Left ventricle myocardium superior (tissue), 1 donor: ENCODE measurements at regions of chr9 and their contacts with region 1.

Region 1: DNA sequence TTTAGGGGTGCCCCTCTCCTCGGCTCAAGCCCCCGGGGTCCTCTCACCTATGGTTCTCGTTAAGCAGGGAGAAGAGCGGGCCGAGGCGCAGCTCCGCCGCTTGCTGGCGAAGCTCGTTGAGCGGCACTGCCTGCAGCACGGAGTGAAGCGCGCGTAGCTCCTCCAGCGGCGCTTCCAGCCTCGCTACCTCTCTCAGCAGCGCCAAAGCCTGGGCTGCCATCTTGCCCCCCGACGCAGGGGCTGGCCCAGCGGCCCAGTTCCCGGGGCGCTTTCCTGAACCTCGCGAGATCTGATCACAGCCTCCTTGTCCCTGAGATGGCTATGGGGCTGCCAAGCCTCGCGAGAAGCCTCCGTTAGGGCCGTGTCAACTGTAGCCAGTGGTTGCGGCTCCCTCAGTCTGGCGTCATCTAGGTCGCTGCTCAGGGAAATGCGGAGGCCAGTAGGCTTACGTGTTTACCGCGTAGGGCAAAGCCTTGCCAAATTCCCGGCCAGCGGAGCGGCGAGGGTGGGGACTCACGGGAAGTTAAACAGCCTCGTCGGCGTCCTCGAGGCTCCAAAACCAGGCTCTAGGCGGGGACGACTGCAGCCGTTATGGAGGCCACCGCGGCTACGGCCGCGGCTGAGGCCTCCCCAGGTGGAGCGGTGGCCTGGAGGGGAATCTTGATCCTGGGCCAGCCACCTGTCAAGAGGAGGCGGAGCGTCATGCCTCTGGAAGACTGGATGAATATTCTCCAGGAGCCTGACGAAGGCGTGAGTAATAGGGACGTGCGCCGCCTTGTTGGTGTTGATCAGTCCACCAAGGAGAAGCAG is at the start of gene PSMD5:
- DNase-seq: peak; percentile 98
- ATAC-seq: peak; percentile 99
- total RNA-seq, gene PSMD5: 14.0 TPM

Region 2: DNA sequence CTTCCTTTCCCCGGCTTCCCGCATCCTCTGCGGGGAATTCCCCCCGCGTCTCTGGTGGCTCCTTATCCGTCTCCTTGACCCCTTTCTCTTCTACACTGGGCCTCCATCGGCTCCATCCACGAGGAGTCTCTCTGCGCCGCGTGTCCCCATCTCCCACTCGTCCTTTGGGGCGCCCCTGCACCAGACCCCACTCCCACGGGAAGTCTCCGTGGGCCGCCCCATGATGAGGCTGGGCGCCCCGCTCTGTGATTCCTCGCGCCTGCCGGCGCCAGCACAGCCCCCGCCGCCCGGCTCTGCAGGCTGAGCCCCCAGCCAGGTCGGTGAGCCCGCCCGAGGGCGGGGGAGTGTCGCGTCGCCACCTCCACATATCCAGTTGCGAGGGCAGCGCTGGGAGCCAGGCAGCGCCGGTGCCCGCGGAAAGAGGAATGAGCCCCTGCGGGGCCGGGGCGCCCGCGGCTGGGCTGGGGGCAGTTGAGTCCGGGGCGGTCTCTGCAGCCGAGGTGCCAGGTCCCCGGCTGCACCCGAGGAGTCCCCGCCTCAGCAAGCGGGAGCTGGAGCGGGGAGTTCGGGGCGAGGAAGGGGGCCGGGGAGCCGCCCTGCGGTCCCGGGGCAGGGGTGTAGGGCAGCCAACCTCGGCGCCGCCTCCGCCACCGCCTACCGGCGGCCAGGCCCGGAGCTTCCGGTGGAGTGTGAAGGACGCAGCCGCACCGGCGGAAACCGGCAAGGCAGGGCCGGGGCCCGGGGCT is 85.8 kb after region 1 on chr9:
- intact Hi-C with region 1: loop called (anchors 5 kb)
- DNase-seq: peak; percentile 89
- ATAC-seq: peak; percentile 95